Stomach (tissue), 19 donors: ENCODE measurements at regions of chr4 and their contacts with region 1.

Region 1: GRCh38 chr4:138174981-138175794 is 67.0 kb downstream of the SLC7A11 start:
- DNase-seq: peak; percentile 64 to 77
- H3K4me3 ChIP-seq: no peak overlapping the region
- H3K27ac ChIP-seq: peak overlapping the region in 1 of 5 donors; percentile 4
- H3K4me1 ChIP-seq: peaks cover 0 to 10% (median 7%) of the 10 kb centered on the region in 4 donors
- H3K27me3 ChIP-seq: no peaks in the 10 kb centered on the region
- CTCF ChIP-seq: no peak
- EP300 ChIP-seq: no peak
- POLR2A ChIP-seq: no peak

Region 2: DNA sequence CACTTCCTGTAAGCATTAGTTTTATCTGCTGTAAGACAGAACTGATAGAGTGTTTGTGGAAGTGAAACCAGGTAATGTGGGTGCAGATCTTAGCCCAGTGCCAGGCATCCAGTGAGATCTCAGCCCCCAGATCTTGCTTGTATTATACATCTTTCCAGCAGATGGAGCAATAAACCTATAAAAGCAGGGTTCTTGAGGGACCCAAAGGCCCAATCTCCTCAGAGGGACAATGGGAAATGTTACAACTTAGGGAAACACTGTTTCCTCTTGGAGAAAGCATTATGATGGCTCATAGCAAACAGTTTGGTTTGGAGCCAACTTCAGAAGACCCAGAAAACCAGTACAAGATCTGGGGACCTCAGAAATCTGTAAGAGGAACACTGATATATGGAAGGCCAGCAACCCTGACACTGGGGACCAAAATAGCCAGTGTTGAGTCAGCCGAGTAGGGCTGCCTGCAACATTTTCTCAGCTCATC is 139.4 kb before region 1 on chr4:
- intact Hi-C with region 1: loop called (anchors 10 kb)
- DNase-seq: peak in 1 of 2 donors; percentile 70
- H3K4me3 ChIP-seq: no peak overlapping the region
- H3K27ac ChIP-seq: no peak overlapping the region
- H3K4me1 ChIP-seq: peaks cover 0 to 4% (median 0%) of the 10 kb centered on the region in 4 donors
- H3K27me3 ChIP-seq: no peaks in the 10 kb centered on the region
- CTCF ChIP-seq: peak in 4 of 7 experiments; percentile 29 to 50 (median 44)
- EP300 ChIP-seq: no peak
- POLR2A ChIP-seq: no peak

Region 3: DNA sequence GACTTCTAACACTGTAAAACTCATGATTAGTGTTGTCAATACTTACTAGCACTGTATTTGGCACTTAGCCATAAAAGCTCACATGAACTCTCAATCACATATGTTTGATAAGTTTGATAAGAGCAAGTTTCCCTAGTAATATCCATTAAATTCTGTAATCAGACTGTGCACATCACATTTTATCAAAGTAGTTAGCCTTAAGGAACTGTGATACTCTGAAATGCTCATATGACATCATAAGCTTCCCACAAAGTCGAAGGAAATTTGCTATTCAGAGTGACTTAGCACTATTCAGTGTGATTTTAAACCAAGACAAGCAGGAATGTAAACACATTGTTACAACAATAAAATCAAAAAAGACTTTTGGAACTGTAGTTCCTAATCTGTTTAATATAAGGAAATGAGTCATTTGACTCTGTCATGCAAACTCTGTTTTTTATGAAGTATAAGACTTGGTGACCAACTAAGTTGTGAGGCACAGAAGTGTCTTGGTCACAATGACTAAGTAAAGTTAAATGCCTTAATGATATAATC is 60.3 kb after region 1 on chr4:
- intact Hi-C with region 1: no loop called
- DNase-seq: peak in 1 of 2 donors; percentile 30
- H3K4me3 ChIP-seq: no peak overlapping the region
- H3K27ac ChIP-seq: peak overlapping the region in 4 of 5 donors; percentile 10 to 69 (median 46)
- H3K4me1 ChIP-seq: peaks cover 0 to 15% (median 3%) of the 10 kb centered on the region in 4 donors
- H3K27me3 ChIP-seq: no peaks in the 10 kb centered on the region
- CTCF ChIP-seq: no peak
- EP300 ChIP-seq: no peak
- POLR2A ChIP-seq: no peak

Region 4: DNA sequence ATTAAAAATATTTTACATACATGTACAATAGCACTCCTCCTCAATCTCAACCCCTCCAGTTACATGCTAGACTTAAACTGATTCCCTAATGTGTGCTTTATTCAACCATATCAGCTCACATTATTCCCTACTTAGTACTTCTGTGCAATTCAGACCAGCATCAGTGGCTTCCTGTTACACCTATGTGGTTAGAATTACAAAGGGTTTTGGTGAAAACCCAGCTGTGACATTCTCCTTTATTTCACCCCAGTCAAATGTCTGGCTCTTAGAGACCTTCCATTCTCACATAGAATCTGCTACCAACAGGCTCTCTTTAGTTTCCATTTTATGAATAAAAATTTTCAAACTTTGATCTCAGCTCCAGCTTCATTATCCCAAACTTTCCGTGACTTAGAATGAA is 152.2 kb after region 1 on chr4:
- intact Hi-C with region 1: no loop called
- DNase-seq: no peak
- H3K4me3 ChIP-seq: no peak overlapping the region
- H3K27ac ChIP-seq: no peak overlapping the region
- H3K4me1 ChIP-seq: no peaks in the 10 kb centered on the region
- H3K27me3 ChIP-seq: no peaks in the 10 kb centered on the region
- CTCF ChIP-seq: no peak
- EP300 ChIP-seq: no peak
- POLR2A ChIP-seq: no peak